ENCODE measurements at regions of chr6 and their contacts with region 1.

Region 1: GRCh38 chr6:85642774-85643536 is at the start of gene SYNCRIP:
- DNase-seq: peak; percentile 99
- ATAC-seq: peak; percentile 87
- H3K4me3 ChIP-seq: peak within 1 kb of the TSS; percentile 98
- H3K4me1 ChIP-seq: peaks cover 19% of the 10 kb centered on the region
- CTCF ChIP-seq: no peak
- total RNA-seq, gene SYNCRIP: 55.8 to 127 (median 92.7) TPM

Region 2: DNA sequence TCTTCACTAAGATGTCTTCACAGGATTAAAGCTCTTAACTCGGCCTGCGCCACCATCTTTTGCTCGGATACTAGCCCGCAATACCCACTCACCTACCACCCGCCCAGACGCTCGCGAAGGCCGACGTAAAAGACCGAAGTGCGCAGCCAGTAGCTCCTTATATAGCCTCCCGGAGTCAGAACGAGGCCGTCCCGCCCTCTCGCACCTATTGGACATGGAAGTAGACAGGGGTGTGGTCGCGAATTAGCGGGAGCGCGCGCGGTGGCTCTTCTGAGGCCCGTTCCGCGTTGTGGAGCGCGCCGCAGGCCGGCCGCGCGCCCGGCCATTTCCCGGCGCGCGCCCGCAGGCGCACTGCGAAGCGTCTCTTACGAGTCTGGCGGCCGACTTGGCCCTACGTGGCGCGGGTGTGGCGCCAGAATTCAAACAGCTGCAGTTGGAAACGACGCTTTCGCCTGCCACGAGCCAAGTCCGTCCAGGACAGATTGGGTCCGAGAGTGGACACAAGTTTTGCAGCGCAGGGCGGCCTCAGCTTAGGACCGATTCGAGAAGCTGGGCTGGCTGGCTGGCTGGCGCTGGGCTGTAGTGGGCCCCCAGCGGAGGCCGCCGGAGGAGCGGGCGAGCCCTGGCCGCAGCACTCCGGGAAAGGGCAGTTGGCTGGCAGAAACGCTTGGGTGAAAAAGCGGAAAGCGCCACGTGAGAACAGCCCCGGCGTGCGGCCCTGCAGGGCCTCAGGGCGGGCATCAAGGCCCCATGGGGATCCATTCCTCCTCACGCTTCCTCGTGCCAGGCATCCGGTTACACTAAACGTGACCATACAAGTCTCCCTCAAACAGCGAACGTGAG is 35.9 kb after region 1 on chr6:
- intact Hi-C with region 1: loop called (anchors 1 to 5 kb)
- DNase-seq: peak; percentile 98
- ATAC-seq: peak; percentile 98
- H3K4me3 ChIP-seq: peak overlapping the region; percentile 74
- H3K4me1 ChIP-seq: peaks cover 27% of the 10 kb centered on the region
- CTCF ChIP-seq: no peak

Measured in mucosa of descending colon (tissue), 3 donors.